ENCODE measurements at regions of chr16 and their contacts with region 1.

Region 1: GRCh38 chr16:27273670-27274423 is 5.3 kb upstream of the NSMCE1 start:
- DNase-seq: no peak
- ATAC-seq: peak; percentile 82
- H3K4me3 ChIP-seq: no peak overlapping the region
- H3K27ac ChIP-seq: no peak overlapping the region
- H3K4me1 ChIP-seq: peaks cover 16% of the 10 kb centered on the region
- H3K27me3 ChIP-seq: no peaks in the 10 kb centered on the region
- CTCF ChIP-seq: no peak
- EP300 ChIP-seq: 0 out of 4 replicates have a peak, but pooled peaks of 1 of the 2 experiments have one; percentile 17
- POLR2A ChIP-seq: no peak
- RAD21 ChIP-seq: no peak

Region 2: DNA sequence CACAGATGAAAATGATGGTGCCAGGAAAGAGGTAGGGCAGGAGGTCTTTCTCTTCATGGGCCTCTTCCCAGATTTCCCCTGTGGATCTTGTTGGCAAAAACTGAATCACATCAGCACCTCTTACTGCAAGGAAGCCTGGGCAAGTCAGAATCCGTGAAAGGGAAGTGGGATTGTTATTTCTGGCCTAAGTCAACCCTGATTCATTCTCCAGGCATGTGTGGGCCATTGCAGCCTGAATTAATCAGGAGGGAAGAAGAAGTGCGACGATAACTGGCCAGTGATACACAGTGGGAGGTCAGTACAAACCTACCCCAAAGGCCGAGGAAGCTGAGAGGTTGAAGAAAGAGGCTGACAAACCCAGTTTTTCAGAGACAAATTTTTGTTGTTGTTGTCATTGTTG is 12.6 kb after region 1 on chr16:
- CTCF ChIA-PET with region 1: interaction called, 17 read pairs
- POLR2A ChIA-PET with region 1: interaction called, 12 read pairs
- RAD21 ChIA-PET with region 1: interaction called, 8 read pairs
- SMC1A ChIA-PET with region 1: interaction called, 53 read pairs
- in situ Hi-C with region 1: no loop called
- intact Hi-C with region 1: no loop called
- DNase-seq: no peak
- ATAC-seq: no peak
- H3K4me3 ChIP-seq: no peak overlapping the region
- H3K27ac ChIP-seq: no peak overlapping the region
- H3K4me1 ChIP-seq: peaks cover 40% of the 10 kb centered on the region
- H3K27me3 ChIP-seq: 0 out of 4 replicates have a peak, but pooled peaks cover 0 to 3% of the 10 kb centered on the region in 2 experiments
- CTCF ChIP-seq: no peak
- EP300 ChIP-seq: no peak
- POLR2A ChIP-seq: no peak
- RAD21 ChIP-seq: no peak

Region 3: GRCh38 chr16:27495191-27495590 is 221.3 kb after region 1 on chr16:
- CTCF ChIA-PET with region 1: no interaction called
- POLR2A ChIA-PET with region 1: no interaction called
- RAD21 ChIA-PET with region 1: no interaction called
- SMC1A ChIA-PET with region 1: no interaction called
- in situ Hi-C with region 1: no loop called
- intact Hi-C with region 1: no loop called
- DNase-seq: no peak
- ATAC-seq: no peak
- H3K4me3 ChIP-seq: no peak overlapping the region
- H3K27ac ChIP-seq: no peak overlapping the region
- H3K4me1 ChIP-seq: no peaks in the 10 kb centered on the region
- H3K27me3 ChIP-seq: no peaks in the 10 kb centered on the region
- CTCF ChIP-seq: no peak
- EP300 ChIP-seq: no peak
- POLR2A ChIP-seq: no peak
- RAD21 ChIP-seq: no peak